Caco-2 (cell line): ENCODE measurements at regions of chrX and their contacts with region 1.

Region 1: GRCh38 chrX:120790118-120790517 is 85.5 kb downstream of the CT47B1 start:
- DNase-seq: peak in 1 of 2 experiments; percentile 39
- H3K4me3 ChIP-seq: no peak overlapping the region
- H3K4me3 Mint-ChIP-seq: no peak overlapping the region
- H3K27ac Mint-ChIP-seq: no peak overlapping the region
- H3K4me1 ChIP-seq: no peaks in the 10 kb centered on the region
- H3K4me1 Mint-ChIP-seq: no peaks in the 10 kb centered on the region
- H3K27me3 ChIP-seq: no peaks in the 10 kb centered on the region
- H3K27me3 Mint-ChIP-seq: peaks cover 3% of the 10 kb centered on the region
- CTCF ChIP-seq: peak; percentile 44 to 55

Region 2: DNA sequence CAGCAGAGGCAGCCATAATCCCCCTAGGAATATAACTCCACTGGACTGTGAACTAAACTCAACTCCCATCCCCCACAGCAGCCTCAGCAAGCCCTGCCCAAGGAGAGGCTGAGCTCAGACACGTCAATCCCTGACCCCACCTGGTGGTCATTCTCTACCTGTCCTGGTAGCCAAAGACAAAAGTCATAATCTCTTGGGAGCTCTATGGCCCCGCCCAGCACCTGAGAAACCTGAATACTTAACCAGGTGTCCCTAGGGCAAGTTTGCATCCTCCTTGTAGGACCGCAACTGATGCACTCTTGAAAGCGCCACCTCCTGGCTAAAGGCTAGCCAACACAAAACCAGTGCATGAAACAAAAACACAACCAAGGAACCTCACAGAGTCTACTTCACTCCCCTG is 67.1 kb after region 1 on chrX:
- CTCF ChIA-PET with region 1: interaction called, 9 read pairs
- POLR2A ChIA-PET with region 1: no interaction called
- intact Hi-C with region 1: loop called (anchors 1 kb)
- DNase-seq: peak; percentile 9 to 38
- H3K4me3 ChIP-seq: no peak overlapping the region
- H3K4me3 Mint-ChIP-seq: no peak overlapping the region
- H3K27ac Mint-ChIP-seq: no peak overlapping the region
- H3K4me1 ChIP-seq: no peaks in the 10 kb centered on the region
- H3K4me1 Mint-ChIP-seq: no peaks in the 10 kb centered on the region
- H3K27me3 ChIP-seq: no peaks in the 10 kb centered on the region
- H3K27me3 Mint-ChIP-seq: no peaks in the 10 kb centered on the region
- CTCF ChIP-seq: no peak

Region 3: GRCh38 chrX:121579016-121579760 is 789.1 kb after region 1 on chrX:
- CTCF ChIA-PET with region 1: no interaction called
- POLR2A ChIA-PET with region 1: no interaction called
- intact Hi-C with region 1: loop called (anchors 1 kb)
- DNase-seq: peak in 1 of 2 experiments; percentile 17
- H3K4me3 ChIP-seq: no peak overlapping the region
- H3K4me3 Mint-ChIP-seq: no peak overlapping the region
- H3K27ac Mint-ChIP-seq: no peak overlapping the region
- H3K4me1 ChIP-seq: no peaks in the 10 kb centered on the region
- H3K4me1 Mint-ChIP-seq: no peaks in the 10 kb centered on the region
- H3K27me3 ChIP-seq: no peaks in the 10 kb centered on the region
- H3K27me3 Mint-ChIP-seq: no peaks in the 10 kb centered on the region
- CTCF ChIP-seq: peak in 1 of 2 experiments; percentile 35